ENCODE measurements at regions of chr12 and their contacts with region 1.

Region 1: GRCh38 chr12:110869026-110869425 is 22.2 kb downstream of the CCDC63 start:
- DNase-seq: no peak

Region 2: GRCh38 chr12:109920261-109920780 is 948.7 kb before region 1 on chr12:
- intact Hi-C with region 1: loop called in 1 of 2 experiments (anchors 5 kb)
- DNase-seq: peak; percentile 48

Region 3: DNA sequence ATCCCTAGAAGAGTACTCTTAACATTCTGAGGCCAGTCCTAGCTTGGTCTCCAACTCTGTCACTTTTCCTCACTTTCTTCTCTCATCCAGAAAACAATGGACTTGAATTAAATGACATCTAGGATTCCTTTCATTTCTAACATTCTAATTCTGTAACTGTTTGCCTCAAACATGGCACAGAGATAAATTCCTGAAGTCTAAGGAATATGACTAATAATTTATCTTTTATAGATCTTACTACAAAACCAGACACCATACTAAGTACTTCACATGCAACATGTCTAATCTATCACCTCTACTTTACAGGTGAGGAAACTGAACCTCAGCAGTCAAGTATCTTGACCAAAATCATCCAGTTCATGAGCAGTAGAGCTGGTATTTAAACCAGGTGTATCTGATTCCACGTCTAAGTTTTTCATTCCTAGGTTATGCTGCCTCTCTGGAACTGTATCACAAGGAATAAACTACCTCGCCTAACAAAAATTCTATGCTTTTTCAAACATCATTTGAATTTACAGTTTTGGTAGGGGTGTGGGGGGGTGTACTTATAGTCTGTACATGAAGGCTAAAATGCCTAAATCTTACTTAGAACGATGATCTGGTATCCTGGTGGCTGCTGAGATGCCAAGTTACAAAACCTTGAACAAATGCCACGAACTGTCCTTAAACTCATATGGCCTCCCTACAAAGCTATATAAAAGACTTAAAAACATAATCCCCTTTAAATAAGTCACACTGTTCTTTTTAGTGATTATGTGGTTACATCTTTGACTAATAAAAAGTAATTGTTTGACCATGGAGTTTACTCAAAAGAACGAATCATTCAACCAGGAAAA is 688.5 kb after region 1 on chr12:
- intact Hi-C with region 1: no loop called
- DNase-seq: no peak